T-cell (primary cell): ENCODE measurements at regions of chr2 and their contacts with region 1.

Region 1: GRCh38 chr2:74041182-74041581 is 56.5 kb downstream of the TET3 start:
- DNase-seq: no peak
- ATAC-seq: peak in 1 of 4 experiments; percentile 26
- H3K4me3 ChIP-seq: no peak overlapping the region
- H3K4me3 Mint-ChIP-seq: peak overlapping the region in 1 of 3 donors; percentile 50
- H3K27ac ChIP-seq: no peak overlapping the region
- H3K27ac Mint-ChIP-seq: peak overlapping the region; percentile 63 to 72
- H3K4me1 ChIP-seq: peaks cover 33 to 37% of the 10 kb centered on the region in 2 experiments
- H3K4me1 Mint-ChIP-seq: peaks cover 71 to 81% (median 79%) of the 10 kb centered on the region in 3 donors
- H3K27me3 ChIP-seq: no peaks in the 10 kb centered on the region
- H3K27me3 Mint-ChIP-seq: no peaks in the 10 kb centered on the region

Region 2: GRCh38 chr2:74138600-74139323 is 97.6 kb after region 1 on chr2:
- CTCF ChIA-PET with region 1: no interaction called
- POLR2A ChIA-PET with region 1: interaction called in 1 of 2 experiments, 12 read pairs
- DNase-seq: no peak
- ATAC-seq: no peak
- H3K4me3 ChIP-seq: no peak overlapping the region
- H3K4me3 Mint-ChIP-seq: no peak overlapping the region
- H3K27ac ChIP-seq: no peak overlapping the region
- H3K27ac Mint-ChIP-seq: no peak overlapping the region
- H3K4me1 ChIP-seq: no peaks in the 10 kb centered on the region
- H3K4me1 Mint-ChIP-seq: peaks cover 0 to 7% (median 0%) of the 10 kb centered on the region in 3 donors
- H3K27me3 ChIP-seq: peaks cover 0 to 3% of the 10 kb centered on the region in 2 experiments
- H3K27me3 Mint-ChIP-seq: no peaks in the 10 kb centered on the region

Region 3: DNA sequence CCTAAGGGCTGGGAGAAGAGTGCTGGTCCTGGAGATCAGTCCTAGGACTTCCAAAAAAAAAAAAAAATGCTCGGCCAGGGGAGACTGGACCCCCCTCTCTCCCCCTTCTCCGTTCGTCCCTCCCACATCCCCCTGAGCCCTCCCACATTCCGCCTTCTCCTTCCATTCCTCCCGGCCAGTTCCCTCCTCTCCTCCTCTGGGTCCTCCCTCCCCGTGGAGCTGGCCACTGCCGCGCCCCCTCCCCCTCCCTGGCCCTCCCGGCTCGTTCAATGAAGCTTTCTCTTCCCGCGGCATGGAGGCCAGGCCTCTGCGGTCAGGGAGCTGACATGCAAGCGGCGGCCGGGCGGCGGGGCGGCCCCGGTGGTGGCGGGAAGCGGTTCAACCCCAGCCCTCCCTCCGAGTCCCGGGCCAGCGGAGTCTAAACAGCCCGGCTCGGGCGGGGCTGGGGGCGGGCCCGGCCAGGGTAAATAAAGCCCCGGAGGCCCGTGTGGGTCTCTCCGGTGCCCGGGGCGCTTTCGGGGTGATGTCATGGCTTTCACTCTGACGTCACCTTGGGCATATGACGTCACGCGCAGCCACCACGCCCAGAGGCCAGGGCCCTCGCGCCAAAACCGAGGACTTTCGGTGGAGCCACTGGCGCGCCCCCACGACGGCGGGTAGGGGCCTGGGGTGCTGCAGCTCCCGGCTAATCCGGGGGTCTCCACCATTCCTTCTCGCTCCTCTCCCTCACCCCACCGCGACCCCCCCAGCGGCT is 512.9 kb after region 1 on chr2 and contains the start of gene LOXL3:
- CTCF ChIA-PET with region 1: no interaction called
- POLR2A ChIA-PET with region 1: no interaction called
- DNase-seq: peak in 28 of 35 experiments; percentile 20 to 85 (median 61)
- ATAC-seq: peak; percentile 43 to 71 (median 50)
- H3K4me3 ChIP-seq: peak within 1 kb of the TSS; percentile 96 to 97
- H3K4me3 Mint-ChIP-seq: peak within 1 kb of the TSS; percentile 86 to 94 (median 91)
- H3K27ac ChIP-seq: peak within 1 kb of the TSS; percentile 75
- H3K27ac Mint-ChIP-seq: peak within 1 kb of the TSS; percentile 75 to 85
- H3K4me1 ChIP-seq: peaks cover under 1 to 33% of the 10 kb centered on the region in 2 experiments
- H3K4me1 Mint-ChIP-seq: peaks cover 9 to 21% (median 19%) of the 10 kb centered on the region in 3 donors
- H3K27me3 ChIP-seq: peaks cover 0 to 31% of the 10 kb centered on the region in 2 experiments
- H3K27me3 Mint-ChIP-seq: peaks cover 19 to 27% of the 10 kb centered on the region in 2 donors
- total RNA-seq, gene LOXL3: 0.10 to 0.47 (median 0.38) TPM in 4 of 5 donors, not detected in the other